ENCODE measurements at regions of chr9 and their contacts with region 1.

Region 1: GRCh38 chr9:91036826-91037510 is 235.3 kb downstream of the SYK start:
- DNase-seq: peak; percentile 82
- H3K4me3 Mint-ChIP-seq: peak overlapping the region; percentile 8
- H3K27ac Mint-ChIP-seq: peak overlapping the region; percentile 57
- H3K4me1 Mint-ChIP-seq: peaks cover 57% of the 10 kb centered on the region
- H3K27me3 Mint-ChIP-seq: no peaks in the 10 kb centered on the region

Region 2: DNA sequence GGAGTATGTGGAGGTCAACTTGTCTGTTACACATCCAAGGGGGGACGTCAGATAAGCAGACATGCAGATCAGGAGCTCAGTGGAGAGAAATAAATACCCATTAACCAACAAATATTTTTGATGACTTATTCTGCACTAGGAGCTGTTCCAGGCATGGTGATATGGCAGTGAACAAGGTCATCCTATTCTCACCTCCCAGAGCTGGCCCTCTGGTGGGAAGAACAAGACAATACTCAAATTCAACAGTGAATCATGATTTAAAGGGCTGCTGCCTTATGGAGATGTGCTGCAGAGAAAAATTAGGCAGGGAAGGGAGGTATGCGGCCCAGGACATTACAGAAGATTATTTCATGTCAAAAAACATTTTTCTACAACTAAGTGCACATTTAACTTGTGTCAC is 198.9 kb before region 1 on chr9:
- CTCF ChIA-PET with region 1: no interaction called
- POLR2A ChIA-PET with region 1: no interaction called
- DNase-seq: no peak
- H3K4me3 Mint-ChIP-seq: no peak overlapping the region
- H3K27ac Mint-ChIP-seq: no peak overlapping the region
- H3K4me1 Mint-ChIP-seq: no peaks in the 10 kb centered on the region
- H3K27me3 Mint-ChIP-seq: no peaks in the 10 kb centered on the region

Region 3: DNA sequence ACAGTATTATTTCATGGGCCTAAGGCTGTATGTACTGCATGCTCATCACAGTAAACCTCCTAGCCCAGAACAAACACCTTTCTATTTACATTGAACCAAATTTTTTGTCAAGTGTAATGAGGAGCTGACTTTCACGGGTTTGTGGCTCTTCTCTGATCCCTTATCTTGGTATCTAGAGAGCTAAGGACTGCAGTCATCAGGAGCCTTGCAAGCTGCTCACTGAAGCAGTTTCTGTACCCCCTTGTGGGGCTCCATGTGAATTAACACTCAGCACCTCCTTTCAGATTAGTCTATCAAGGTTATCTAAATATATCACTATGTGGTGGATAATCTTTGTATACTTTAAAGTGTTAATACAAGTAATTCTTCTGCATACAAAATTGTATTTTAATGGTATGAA is 216.5 kb after region 1 on chr9:
- CTCF ChIA-PET with region 1: interaction called, 11 read pairs
- POLR2A ChIA-PET with region 1: no interaction called
- DNase-seq: peak; percentile 72
- H3K4me3 Mint-ChIP-seq: no peak overlapping the region
- H3K27ac Mint-ChIP-seq: peak overlapping the region; percentile 19
- H3K4me1 Mint-ChIP-seq: peaks cover 33% of the 10 kb centered on the region
- H3K27me3 Mint-ChIP-seq: no peaks in the 10 kb centered on the region

Region 4: GRCh38 chr9:91360551-91361290 is 323.8 kb after region 1 on chr9:
- CTCF ChIA-PET with region 1: interaction called, 4 read pairs
- POLR2A ChIA-PET with region 1: interaction called, 10 read pairs
- DNase-seq: no peak
- H3K4me3 Mint-ChIP-seq: peak overlapping the region; percentile 93
- H3K27ac Mint-ChIP-seq: peak overlapping the region; percentile 93
- H3K4me1 Mint-ChIP-seq: peaks cover 57% of the 10 kb centered on the region
- H3K27me3 Mint-ChIP-seq: no peaks in the 10 kb centered on the region

Region 5: GRCh38 chr9:91422758-91423711 is 386.1 kb after region 1 on chr9:
- CTCF ChIA-PET with region 1: interaction called, 16 read pairs
- POLR2A ChIA-PET with region 1: interaction called, 4 read pairs
- DNase-seq: peak; percentile 71
- H3K4me3 Mint-ChIP-seq: peak overlapping the region; percentile 96
- H3K27ac Mint-ChIP-seq: peak overlapping the region; percentile 91
- H3K4me1 Mint-ChIP-seq: peaks cover 63% of the 10 kb centered on the region
- H3K27me3 Mint-ChIP-seq: no peaks in the 10 kb centered on the region